ENCODE measurements at regions of chr20 and their contacts with region 1.

Region 1: GRCh38 chr20:47379433-47380150 is 23.1 kb upstream of the ZMYND8 start:
- DNase-seq: no peak
- ATAC-seq: no peak
- H3K4me3 Mint-ChIP-seq: no peak overlapping the region
- H3K27ac Mint-ChIP-seq: peak overlapping the region; percentile 58
- H3K4me1 Mint-ChIP-seq: peaks cover 31% of the 10 kb centered on the region
- H3K27me3 Mint-ChIP-seq: no peaks in the 10 kb centered on the region; the same call in 1 of the 2 replicates
- CTCF ChIP-seq: no peak

Region 2: DNA sequence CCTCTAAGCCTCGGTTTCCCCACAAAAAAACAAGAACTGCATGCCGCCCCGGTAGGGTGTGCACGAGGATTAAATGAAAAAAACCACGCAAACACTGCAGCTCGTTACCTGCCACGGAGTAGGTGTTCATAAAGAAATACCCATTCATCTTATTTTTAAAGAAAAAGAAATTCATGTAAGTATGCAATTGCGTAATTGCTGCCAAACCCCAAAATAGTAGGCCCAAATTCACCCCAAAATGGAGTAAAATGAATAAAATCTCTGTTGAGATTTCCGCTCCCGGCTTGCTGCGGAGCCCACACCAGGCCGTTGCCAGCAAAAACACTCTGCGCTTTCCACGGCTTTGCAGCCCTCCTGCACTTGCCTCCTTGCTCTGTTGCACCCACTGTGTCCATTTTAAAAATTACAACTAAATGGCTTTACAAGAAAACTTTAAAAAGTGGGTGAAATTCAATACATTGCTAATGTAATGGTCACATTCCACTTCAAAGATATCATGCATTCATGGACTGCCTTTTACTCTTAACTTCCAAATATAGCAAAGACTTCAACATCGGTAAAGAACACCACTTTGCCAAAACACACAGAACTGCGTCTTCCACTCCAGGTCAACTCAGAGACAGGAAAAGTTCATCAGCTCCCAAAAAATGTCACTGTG is 148.1 kb before region 1 on chr20:
- CTCF ChIA-PET with region 1: interaction called, 17 read pairs
- POLR2A ChIA-PET with region 1: no interaction called
- DNase-seq: no peak
- ATAC-seq: no peak
- H3K4me3 Mint-ChIP-seq: no peak overlapping the region
- H3K27ac Mint-ChIP-seq: peak overlapping the region; percentile 51
- H3K4me1 Mint-ChIP-seq: peaks cover 22% of the 10 kb centered on the region
- H3K27me3 Mint-ChIP-seq: no peaks in the 10 kb centered on the region
- CTCF ChIP-seq: no peak

Region 3: GRCh38 chr20:47272893-47273590 is 106.5 kb before region 1 on chr20:
- CTCF ChIA-PET with region 1: interaction called, 250 read pairs
- POLR2A ChIA-PET with region 1: interaction called, 8 read pairs
- DNase-seq: peak; percentile 28
- ATAC-seq: peak; percentile 79
- H3K4me3 Mint-ChIP-seq: no peak overlapping the region
- H3K27ac Mint-ChIP-seq: peak overlapping the region; percentile 89
- H3K4me1 Mint-ChIP-seq: peaks cover 29% of the 10 kb centered on the region
- H3K27me3 Mint-ChIP-seq: no peaks in the 10 kb centered on the region
- CTCF ChIP-seq: peak; percentile 73

Region 4: DNA sequence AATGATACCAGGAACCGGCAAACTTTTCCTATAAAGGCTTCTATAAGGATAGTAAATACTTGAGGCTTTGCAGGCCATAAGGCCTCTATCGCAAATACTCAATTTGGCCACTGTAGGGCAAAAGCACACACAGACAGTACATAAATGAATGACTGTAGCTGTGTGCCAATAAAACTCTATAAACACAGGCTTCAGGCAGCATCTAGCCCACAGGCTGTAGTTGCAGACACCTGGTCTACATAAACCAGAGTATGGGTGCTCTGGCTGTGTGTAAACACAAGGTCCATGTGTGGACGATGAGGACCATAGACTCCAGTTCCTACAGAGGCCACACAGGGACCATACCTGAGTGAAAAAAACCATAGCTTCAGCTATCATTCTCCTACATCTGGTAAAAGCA is 75.3 kb before region 1 on chr20:
- CTCF ChIA-PET with region 1: interaction called, 22 read pairs
- POLR2A ChIA-PET with region 1: no interaction called
- DNase-seq: no peak
- ATAC-seq: no peak; the same call in 1 of the 2 replicates
- H3K4me3 Mint-ChIP-seq: no peak overlapping the region
- H3K27ac Mint-ChIP-seq: peak overlapping the region; percentile 74; the same call in 1 of the 2 replicates
- H3K4me1 Mint-ChIP-seq: peaks cover 49% of the 10 kb centered on the region
- H3K27me3 Mint-ChIP-seq: no peaks in the 10 kb centered on the region
- CTCF ChIP-seq: no peak

Region 5: GRCh38 chr20:47356526-47357295 is 22.9 kb before region 1 on chr20 and contains the start of gene ZMYND8:
- CTCF ChIA-PET with region 1: interaction called, 111 read pairs
- POLR2A ChIA-PET with region 1: interaction called, 5 read pairs
- DNase-seq: peak; percentile 85
- ATAC-seq: peak; percentile 38
- H3K4me3 Mint-ChIP-seq: peak within 1 kb of the TSS; percentile 56
- H3K27ac Mint-ChIP-seq: peak within 1 kb of the TSS; percentile 100
- H3K4me1 Mint-ChIP-seq: no peaks in the 10 kb centered on the region; the same call in 1 of the 2 replicates
- H3K27me3 Mint-ChIP-seq: no peaks in the 10 kb centered on the region
- CTCF ChIP-seq: no peak
- total RNA-seq, gene ZMYND8: 114 to 149 TPM (median 127 TPM) in 3 replicates

Region 6: DNA sequence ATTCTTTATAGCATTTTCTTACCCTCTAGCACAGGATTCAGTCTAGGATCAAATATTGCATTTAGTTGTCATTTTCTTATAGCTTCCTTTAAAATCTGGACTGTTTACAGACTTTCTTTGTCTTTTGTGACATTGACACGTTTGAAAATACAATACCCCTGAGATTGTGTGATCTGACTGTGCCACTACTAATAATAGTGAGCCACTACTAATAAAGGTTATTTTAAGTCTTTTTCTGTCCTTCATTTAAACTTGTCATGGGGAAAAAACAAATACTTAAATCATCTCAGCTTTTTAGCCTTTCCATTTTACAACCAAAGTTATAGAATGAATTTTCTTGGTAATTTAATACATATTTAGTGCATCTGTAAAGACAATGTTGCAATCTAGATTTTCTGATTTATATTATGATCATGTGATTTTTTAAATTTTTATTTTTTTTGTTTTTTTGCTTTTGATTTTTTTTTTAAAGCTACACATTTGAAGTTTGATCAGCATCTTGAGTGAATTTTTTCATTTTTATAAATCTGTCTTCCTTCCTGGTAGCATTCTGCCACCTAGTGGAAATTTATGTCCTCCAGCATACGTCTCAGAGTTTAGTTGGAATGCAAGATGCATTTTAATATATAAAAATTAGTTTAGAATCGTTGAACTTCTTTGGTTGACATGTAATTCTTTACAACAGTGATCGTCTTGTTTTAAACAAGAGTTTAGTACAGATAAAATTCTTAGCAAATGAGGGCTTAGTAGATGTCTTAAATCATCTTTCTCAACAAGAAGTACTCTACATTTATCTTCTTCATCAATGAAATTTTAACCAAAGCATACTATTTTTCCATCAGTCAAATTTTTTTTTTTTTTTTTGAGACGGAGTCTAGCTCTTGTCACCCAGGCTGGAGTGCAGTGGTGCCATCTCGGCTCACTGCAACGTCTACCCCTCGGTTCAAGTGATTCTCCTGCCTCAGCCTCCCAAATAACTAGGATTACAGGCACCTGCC is 241.5 kb after region 1 on chr20:
- CTCF ChIA-PET with region 1: interaction called, 21 read pairs
- POLR2A ChIA-PET with region 1: no interaction called
- DNase-seq: no peak
- ATAC-seq: no peak
- H3K4me3 Mint-ChIP-seq: no peak overlapping the region
- H3K27ac Mint-ChIP-seq: no peak overlapping the region
- H3K4me1 Mint-ChIP-seq: peaks cover 12% of the 10 kb centered on the region
- H3K27me3 Mint-ChIP-seq: no peaks in the 10 kb centered on the region
- CTCF ChIP-seq: peak; percentile 48; the same call in 1 of the 2 replicates